Left cardiac atrium (tissue), 4 donors: ENCODE measurements at regions of chr9 and their contacts with region 1.

Region 1: GRCh38 chr9:29285818-29286217 is 1712.5 kb upstream of the C9orf72 start:
- DNase-seq: no peak
- ATAC-seq: no peak

Region 2: GRCh38 chr9:29144476-29144875 is 141.3 kb before region 1 on chr9:
- intact Hi-C with region 1: no loop called
- DNase-seq: no peak
- ATAC-seq: no peak

Region 3: GRCh38 chr9:29349050-29349449 is 63.2 kb after region 1 on chr9:
- intact Hi-C with region 1: loop called in 1 of 2 experiments (anchors 10 kb)
- DNase-seq: no peak
- ATAC-seq: no peak